HCT116 (cell line): ENCODE measurements at regions of chr2 and their contacts with region 1.

Region 1: GRCh38 chr2:52810460-52810859 is 957.1 kb upstream of the CHAC2 start:
- DNase-seq: peak; percentile 32
- ATAC-seq: peak; percentile 92
- H3K4me3 ChIP-seq: no peak overlapping the region
- H3K27ac ChIP-seq: no peak overlapping the region
- H3K4me1 ChIP-seq: no peaks in the 10 kb centered on the region
- H3K27me3 ChIP-seq: no peaks in the 10 kb centered on the region
- CTCF ChIP-seq: peak; percentile 35 to 65 (median 49)
- POLR2A ChIP-seq: no peak
- RAD21 ChIP-seq: peak; percentile 81

Region 2: DNA sequence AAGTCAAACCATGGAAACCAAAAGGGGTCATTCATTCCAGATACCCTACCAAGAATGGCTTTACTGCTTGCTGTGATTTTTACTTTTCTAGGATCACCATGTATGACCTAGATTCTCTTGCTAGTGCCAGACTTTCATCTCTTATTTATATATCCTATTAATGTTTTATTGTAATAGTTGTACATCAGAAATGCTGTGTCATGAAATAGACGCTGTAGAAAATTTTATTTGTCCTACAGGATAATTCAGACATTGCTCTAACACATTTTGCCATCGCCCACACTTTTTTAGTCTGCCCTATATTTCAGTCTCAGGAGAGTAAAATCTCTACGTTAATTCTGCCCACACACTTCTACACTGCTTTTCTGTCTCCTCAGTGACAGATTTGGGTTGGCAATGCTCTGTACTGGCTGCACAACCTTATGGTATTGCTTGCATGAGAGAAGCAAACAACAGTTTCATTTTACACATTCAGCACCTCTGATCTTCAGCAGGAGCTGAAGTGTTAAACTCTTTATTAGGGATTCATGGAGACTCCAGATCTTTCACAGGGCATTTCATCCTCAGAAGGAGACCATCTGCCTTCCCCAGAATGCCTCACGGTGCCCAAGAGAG is 85.4 kb after region 1 on chr2:
- CTCF ChIA-PET with region 1: no interaction called
- POLR2A ChIA-PET with region 1: no interaction called
- RAD21 ChIA-PET with region 1: no interaction called
- intact Hi-C with region 1: no loop called
- DNase-seq: no peak
- ATAC-seq: no peak
- H3K4me3 ChIP-seq: no peak overlapping the region
- H3K27ac ChIP-seq: no peak overlapping the region
- H3K4me1 ChIP-seq: no peaks in the 10 kb centered on the region
- H3K27me3 ChIP-seq: no peaks in the 10 kb centered on the region
- CTCF ChIP-seq: no peak
- POLR2A ChIP-seq: no peak
- RAD21 ChIP-seq: no peak

Region 3: GRCh38 chr2:52956766-52957165 is 146.3 kb after region 1 on chr2:
- CTCF ChIA-PET with region 1: interaction called, 21 read pairs
- POLR2A ChIA-PET with region 1: no interaction called
- RAD21 ChIA-PET with region 1: interaction called, 5 to 9 read pairs
- intact Hi-C with region 1: loop called (anchors 5 kb)
- DNase-seq: no peak
- ATAC-seq: no peak
- H3K4me3 ChIP-seq: no peak overlapping the region
- H3K27ac ChIP-seq: no peak overlapping the region
- H3K4me1 ChIP-seq: no peaks in the 10 kb centered on the region
- H3K27me3 ChIP-seq: no peaks in the 10 kb centered on the region
- CTCF ChIP-seq: peak; percentile 30 to 55 (median 43); a peak in 5 of 6 replicates
- POLR2A ChIP-seq: no peak
- RAD21 ChIP-seq: peak; percentile 57

Region 4: GRCh38 chr2:52976253-52976949 is 165.9 kb after region 1 on chr2:
- CTCF ChIA-PET with region 1: interaction called, 7 read pairs
- POLR2A ChIA-PET with region 1: no interaction called
- RAD21 ChIA-PET with region 1: no interaction called
- intact Hi-C with region 1: loop called (anchors 5 kb)
- DNase-seq: peak; percentile 36
- ATAC-seq: peak; percentile 92
- H3K4me3 ChIP-seq: no peak overlapping the region
- H3K27ac ChIP-seq: no peak overlapping the region
- H3K4me1 ChIP-seq: no peaks in the 10 kb centered on the region
- H3K27me3 ChIP-seq: no peaks in the 10 kb centered on the region
- CTCF ChIP-seq: peak; percentile 62 to 91 (median 79); a peak in 5 of 6 replicates
- POLR2A ChIP-seq: no peak
- RAD21 ChIP-seq: peak; percentile 87

Region 5: GRCh38 chr2:53202063-53202462 is 391.6 kb after region 1 on chr2:
- CTCF ChIA-PET with region 1: interaction called, 6 read pairs
- POLR2A ChIA-PET with region 1: no interaction called
- RAD21 ChIA-PET with region 1: no interaction called
- intact Hi-C with region 1: loop called (anchors 1 kb)
- DNase-seq: peak; percentile 54
- ATAC-seq: peak; percentile 90
- H3K4me3 ChIP-seq: no peak overlapping the region
- H3K27ac ChIP-seq: no peak overlapping the region
- H3K4me1 ChIP-seq: peaks cover 3% of the 10 kb centered on the region in 2 experiments; a peak in 2 of 4 replicates
- H3K27me3 ChIP-seq: no peaks in the 10 kb centered on the region
- CTCF ChIP-seq: peak; percentile 20 to 46 (median 41); a peak in 4 of 6 replicates
- POLR2A ChIP-seq: no peak
- RAD21 ChIP-seq: peak; percentile 80

Region 6: DNA sequence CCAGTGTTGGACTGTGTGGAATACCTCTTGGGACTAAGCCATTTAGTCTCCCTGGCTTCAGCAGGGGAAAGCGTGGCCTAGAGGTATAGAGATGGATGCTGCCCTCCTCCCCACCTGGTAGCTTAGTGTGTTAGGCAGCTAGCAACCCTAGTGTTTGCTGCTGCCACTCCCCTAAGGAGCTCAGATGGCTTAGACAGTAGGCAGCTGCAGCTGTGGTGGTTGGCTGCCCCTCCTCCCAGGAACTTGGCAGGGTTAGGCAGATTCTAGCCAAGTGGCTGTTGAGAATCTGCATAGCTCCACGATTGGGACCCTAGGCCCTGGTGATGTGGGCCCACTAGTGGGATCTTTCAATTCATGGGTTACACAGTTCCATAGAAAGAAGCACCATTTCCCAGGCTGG is 406.8 kb after region 1 on chr2:
- CTCF ChIA-PET with region 1: no interaction called
- POLR2A ChIA-PET with region 1: no interaction called
- RAD21 ChIA-PET with region 1: no interaction called
- intact Hi-C with region 1: no loop called
- DNase-seq: no peak
- ATAC-seq: no peak
- H3K4me3 ChIP-seq: no peak overlapping the region
- H3K27ac ChIP-seq: no peak overlapping the region
- H3K4me1 ChIP-seq: no peaks in the 10 kb centered on the region
- H3K27me3 ChIP-seq: no peaks in the 10 kb centered on the region
- CTCF ChIP-seq: no peak
- POLR2A ChIP-seq: no peak
- RAD21 ChIP-seq: no peak

Region 7: GRCh38 chr2:53234548-53234903 is 424.1 kb after region 1 on chr2:
- CTCF ChIA-PET with region 1: no interaction called
- POLR2A ChIA-PET with region 1: no interaction called
- RAD21 ChIA-PET with region 1: no interaction called
- intact Hi-C with region 1: no loop called
- DNase-seq: no peak
- ATAC-seq: no peak
- H3K4me3 ChIP-seq: no peak overlapping the region
- H3K27ac ChIP-seq: no peak overlapping the region
- H3K4me1 ChIP-seq: no peaks in the 10 kb centered on the region
- H3K27me3 ChIP-seq: no peaks in the 10 kb centered on the region
- CTCF ChIP-seq: no peak
- POLR2A ChIP-seq: no peak
- RAD21 ChIP-seq: no peak